MCF 10A (cell line): ENCODE measurements at regions of chr19 and their contacts with region 1.

Region 1: DNA sequence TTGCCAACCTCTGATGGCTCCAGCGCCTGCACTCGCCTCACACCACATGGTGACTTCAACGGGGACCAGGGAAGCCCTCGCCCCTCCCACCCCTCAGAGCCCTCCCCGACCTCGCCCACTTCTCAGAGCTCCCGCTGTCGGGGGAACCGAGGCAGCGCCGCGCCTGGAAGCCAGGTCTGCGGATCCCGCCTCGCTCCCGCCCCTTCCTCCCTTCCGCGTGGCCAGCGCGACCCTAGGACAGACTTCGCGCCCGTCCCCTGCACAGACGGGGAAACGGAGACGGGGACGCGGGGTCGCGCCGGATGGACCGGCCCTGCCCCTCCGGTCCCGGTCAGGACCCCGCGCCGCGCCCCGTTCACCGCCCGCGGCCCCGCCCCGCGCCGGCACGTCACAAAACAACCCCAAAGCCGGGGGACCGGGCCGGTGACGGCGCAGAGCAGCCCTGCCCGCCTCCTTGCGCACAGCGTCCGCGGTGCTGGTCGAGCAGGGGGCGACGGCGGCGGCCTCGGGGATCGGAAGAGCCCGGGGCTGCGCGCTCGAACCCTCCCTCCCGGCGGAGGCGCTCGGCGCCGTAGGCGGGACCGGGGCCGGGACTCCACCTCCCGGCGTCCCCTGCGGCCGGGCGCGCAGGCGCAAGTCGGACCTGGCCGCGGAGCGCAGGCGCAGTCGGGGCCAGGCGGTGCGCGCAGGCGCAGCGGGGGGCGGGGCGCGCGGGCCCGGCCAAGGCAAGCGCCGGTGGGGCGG is 379 bp upstream of the CDC34 start:
- DNase-seq: peak; percentile 83
- H3K4me3 Mint-ChIP-seq: peak overlapping the region; percentile 74
- H3K27ac Mint-ChIP-seq: no peak overlapping the region
- H3K4me1 Mint-ChIP-seq: peaks cover 4% of the 10 kb centered on the region
- H3K27me3 Mint-ChIP-seq: no peaks in the 10 kb centered on the region
- CTCF ChIP-seq: no peak

Region 2: GRCh38 chr19:519449-519865 is 11.7 kb before region 1 on chr19:
- CTCF ChIA-PET with region 1: interaction called, 3 read pairs
- POLR2A ChIA-PET with region 1: interaction called, 13 read pairs
- intact Hi-C with region 1: no loop called
- DNase-seq: no peak
- H3K4me3 Mint-ChIP-seq: no peak overlapping the region
- H3K27ac Mint-ChIP-seq: no peak overlapping the region
- H3K4me1 Mint-ChIP-seq: no peaks in the 10 kb centered on the region
- H3K27me3 Mint-ChIP-seq: no peaks in the 10 kb centered on the region
- CTCF ChIP-seq: no peak

Region 3: GRCh38 chr19:572140-572742 is 41.1 kb after region 1 on chr19 and contains the start of gene BSG:
- CTCF ChIA-PET with region 1: interaction called, 6 read pairs
- POLR2A ChIA-PET with region 1: interaction called, 110 read pairs
- intact Hi-C with region 1: loop called (anchors 2 kb)
- DNase-seq: peak; percentile 98
- H3K4me3 Mint-ChIP-seq: peak within 1 kb of the TSS; percentile 85
- H3K27ac Mint-ChIP-seq: peak within 1 kb of the TSS; percentile 96
- H3K4me1 Mint-ChIP-seq: peaks cover 23% of the 10 kb centered on the region
- H3K27me3 Mint-ChIP-seq: no peaks in the 10 kb centered on the region
- CTCF ChIP-seq: no peak
- total RNA-seq, gene BSG: 550 and 557 TPM in 2 replicates

Region 4: DNA sequence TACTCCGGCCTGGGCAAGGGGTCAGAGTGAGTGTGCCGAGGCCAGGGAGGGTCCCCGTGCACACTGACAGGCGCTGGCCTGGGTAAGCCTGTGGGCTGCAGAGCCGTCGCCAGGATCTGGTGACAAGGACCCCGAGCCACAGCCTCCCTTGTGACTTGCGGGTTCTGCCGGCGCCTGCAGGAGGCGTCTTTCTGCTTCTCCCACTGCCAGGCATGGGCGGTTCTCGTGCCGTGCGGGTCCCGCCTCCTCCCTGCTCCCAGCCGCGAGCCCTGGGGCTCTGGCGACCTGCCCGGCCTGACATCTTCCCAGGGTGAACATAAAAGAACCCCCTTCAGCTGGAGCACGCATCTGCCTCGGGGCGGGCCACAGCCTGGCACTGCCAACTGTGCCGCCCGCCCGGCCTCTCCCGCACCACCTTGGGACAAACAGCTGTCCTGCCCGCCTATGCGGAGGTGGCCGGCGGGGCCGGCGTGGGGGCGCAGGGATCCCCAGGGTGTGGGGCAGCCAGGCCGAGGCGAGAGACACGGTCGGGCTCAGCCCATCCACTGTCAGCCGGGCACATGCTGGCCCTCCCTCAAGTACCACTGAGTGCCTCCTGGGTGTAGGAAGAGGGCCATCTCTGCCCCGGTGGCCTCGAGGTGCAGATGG is 57.0 kb after region 1 on chr19:
- CTCF ChIA-PET with region 1: interaction called, 3 read pairs
- POLR2A ChIA-PET with region 1: interaction called, 17 read pairs
- intact Hi-C with region 1: no loop called
- DNase-seq: peak; percentile 94
- H3K4me3 Mint-ChIP-seq: no peak overlapping the region
- H3K27ac Mint-ChIP-seq: no peak overlapping the region
- H3K4me1 Mint-ChIP-seq: no peaks in the 10 kb centered on the region
- H3K27me3 Mint-ChIP-seq: no peaks in the 10 kb centered on the region
- CTCF ChIP-seq: peak; percentile 67

Region 5: GRCh38 chr19:633068-633785 is 102.0 kb after region 1 on chr19 and contains the start of gene POLRMT:
- CTCF ChIA-PET with region 1: no interaction called
- POLR2A ChIA-PET with region 1: interaction called, 7 read pairs
- intact Hi-C with region 1: loop called (anchors 2 kb)
- DNase-seq: peak; percentile 99
- H3K4me3 Mint-ChIP-seq: peak within 1 kb of the TSS; percentile 84
- H3K27ac Mint-ChIP-seq: peak within 1 kb of the TSS; percentile 84
- H3K4me1 Mint-ChIP-seq: peaks cover 3% of the 10 kb centered on the region
- H3K27me3 Mint-ChIP-seq: no peaks in the 10 kb centered on the region
- CTCF ChIP-seq: no peak
- total RNA-seq, gene POLRMT: 36.9 and 40.9 TPM in 2 replicates